ENCODE measurements at regions of chr6 and their contacts with region 1.

Region 1: GRCh38 chr6:85678602-85679444 is 36.1 kb upstream of the SYNCRIP start:
- DNase-seq: peak; percentile 99
- H3K4me3 ChIP-seq: peak overlapping the region; percentile 85 to 87 (median 86)
- H3K27ac ChIP-seq: peak overlapping the region; percentile 91 to 98 (median 94)
- H3K4me1 ChIP-seq: peaks cover 0 to 42% (median 22%) of the 10 kb centered on the region in 4 donors
- H3K27me3 ChIP-seq: no peaks in the 10 kb centered on the region
- CTCF ChIP-seq: peak in 1 of 4 experiments; percentile 22
- EP300 ChIP-seq: peak in 1 of 4 donors; percentile 31
- POLR2A ChIP-seq: peak; percentile 99 to 100

Region 2: GRCh38 chr6:85593438-85594196 is 85.2 kb before region 1 on chr6 and contains the start of gene SNX14:
- intact Hi-C with region 1: loop called (anchors 1 kb)
- DNase-seq: peak; percentile 98
- H3K4me3 ChIP-seq: peak within 1 kb of the TSS; percentile 64 to 91 (median 76)
- H3K27ac ChIP-seq: peak within 1 kb of the TSS; percentile 92 to 98 (median 96)
- H3K4me1 ChIP-seq: peaks cover 0 to 28% (median 18%) of the 10 kb centered on the region in 4 donors
- H3K27me3 ChIP-seq: no peaks in the 10 kb centered on the region
- CTCF ChIP-seq: peak in 1 of 4 experiments; percentile 10
- EP300 ChIP-seq: peak in 1 of 4 donors; percentile 46
- POLR2A ChIP-seq: peak; percentile 24 to 50
- total RNA-seq, gene SNX14: 52.4 to 94.2 (median 83.5) TPM

Region 3: GRCh38 chr6:85642774-85643536 is 35.9 kb before region 1 on chr6 and contains the start of gene SYNCRIP:
- intact Hi-C with region 1: loop called (anchors 1 kb)
- DNase-seq: peak; percentile 100
- H3K4me3 ChIP-seq: peak within 1 kb of the TSS; percentile 80 to 99 (median 87)
- H3K27ac ChIP-seq: peak within 1 kb of the TSS; percentile 96 to 99 (median 98)
- H3K4me1 ChIP-seq: peaks cover 0 to 50% (median 39%) of the 10 kb centered on the region in 4 donors
- H3K27me3 ChIP-seq: no peaks in the 10 kb centered on the region
- CTCF ChIP-seq: no peak
- EP300 ChIP-seq: peak in 2 of 4 donors; percentile 38 to 60
- POLR2A ChIP-seq: peak; percentile 94 to 97
- total RNA-seq, gene SYNCRIP: 71.6 to 84.3 (median 77.5) TPM

Region 4: GRCh38 chr6:85865420-85866369 is 186.9 kb after region 1 on chr6:
- intact Hi-C with region 1: loop called (anchors 5 kb)
- DNase-seq: no peak
- H3K4me3 ChIP-seq: peak overlapping the region; percentile 30 to 52 (median 48)
- H3K27ac ChIP-seq: peak overlapping the region; percentile 71 to 85 (median 79)
- H3K4me1 ChIP-seq: peaks cover 0 to 38% (median 32%) of the 10 kb centered on the region in 4 donors
- H3K27me3 ChIP-seq: no peaks in the 10 kb centered on the region
- CTCF ChIP-seq: no peak
- EP300 ChIP-seq: no peak
- POLR2A ChIP-seq: no peak

Measured in sigmoid colon (tissue), 7 donors.